ENCODE measurements at regions of chr7 and their contacts with region 1.

Region 1: GRCh38 chr7:68955656-68956055 is 642.6 kb upstream of the AUTS2 start:
- DNase-seq: no peak
- ATAC-seq: no peak
- H3K4me3 Mint-ChIP-seq: no peak overlapping the region
- H3K27ac Mint-ChIP-seq: no peak overlapping the region
- H3K4me1 Mint-ChIP-seq: no peaks in the 10 kb centered on the region
- H3K27me3 Mint-ChIP-seq: no peaks in the 10 kb centered on the region

Region 2: DNA sequence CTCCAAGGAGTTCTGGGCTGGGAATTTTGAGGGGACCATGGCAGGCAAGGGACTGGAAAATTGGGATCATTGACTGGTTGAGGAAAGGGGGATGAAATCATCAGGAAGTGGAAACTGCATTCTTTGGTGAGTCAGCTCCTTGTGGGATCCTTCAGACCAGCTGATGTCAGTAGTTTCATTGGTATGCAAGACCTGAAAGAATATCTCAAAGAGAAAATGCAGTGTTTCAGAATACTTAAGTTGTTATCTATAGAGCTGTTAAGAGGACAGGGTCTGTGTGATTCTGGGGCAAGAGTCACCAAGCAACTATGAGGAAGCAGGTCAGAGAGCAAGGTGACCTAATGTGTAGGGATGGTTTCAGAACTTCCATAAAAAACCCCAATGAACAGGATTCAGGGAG is 46.8 kb after region 1 on chr7:
- CTCF ChIA-PET with region 1: no interaction called
- POLR2A ChIA-PET with region 1: no interaction called
- intact Hi-C with region 1: loop called in 1 of 2 experiments (anchors 5 kb)
- DNase-seq: no peak
- ATAC-seq: no peak
- H3K4me3 Mint-ChIP-seq: no peak overlapping the region
- H3K27ac Mint-ChIP-seq: no peak overlapping the region
- H3K4me1 Mint-ChIP-seq: no peaks in the 10 kb centered on the region
- H3K27me3 Mint-ChIP-seq: no peaks in the 10 kb centered on the region

Measured in activated CD4-positive, alpha-beta T cell treated with anti-CD3 and anti-CD28 coated beads for 36 hours (primary cell).